Mammary epithelial cell (primary cell): ENCODE measurements at regions of chr2 and their contacts with region 1.

Region 1: GRCh38 chr2:241110607-241111439 is 8.7 kb upstream of the MTERF4 start:
- DNase-seq: no peak
- H3K4me3 ChIP-seq: no peak overlapping the region
- H3K27ac ChIP-seq: no peak overlapping the region
- H3K4me1 ChIP-seq: no peaks in the 10 kb centered on the region
- H3K27me3 ChIP-seq: no peaks in the 10 kb centered on the region
- CTCF ChIP-seq: no peak

Region 2: GRCh38 chr2:240983361-240983995 is 127.3 kb before region 1 on chr2:
- CTCF ChIA-PET with region 1: no interaction called
- dilution Hi-C with region 1: loop called (anchors 5 kb)
- in situ Hi-C with region 1: no loop called
- intact Hi-C with region 1: no loop called
- DNase-seq: peak; percentile 50
- H3K4me3 ChIP-seq: no peak overlapping the region
- H3K27ac ChIP-seq: no peak overlapping the region
- H3K4me1 ChIP-seq: no peaks in the 10 kb centered on the region
- H3K27me3 ChIP-seq: peaks cover 8% of the 10 kb centered on the region
- CTCF ChIP-seq: peak; percentile 16 to 58

Region 3: GRCh38 chr2:241148891-241149674 is 38.3 kb after region 1 on chr2 and contains the start of gene PASK:
- CTCF ChIA-PET with region 1: no interaction called
- dilution Hi-C with region 1: no loop called
- in situ Hi-C with region 1: no loop called
- intact Hi-C with region 1: no loop called
- DNase-seq: peak; percentile 97
- H3K4me3 ChIP-seq: peak within 1 kb of the TSS; percentile 69 to 85 (median 80)
- H3K27ac ChIP-seq: peak within 1 kb of the TSS; percentile 56
- H3K4me1 ChIP-seq: peaks cover 22% of the 10 kb centered on the region
- H3K27me3 ChIP-seq: no peaks in the 10 kb centered on the region
- CTCF ChIP-seq: no peak
- total RNA-seq, gene PASK: 6.0 to 18.6 TPM

Region 4: GRCh38 chr2:241199897-241200821 is 89.3 kb after region 1 on chr2:
- CTCF ChIA-PET with region 1: no interaction called
- dilution Hi-C with region 1: loop called (anchors 5 kb)
- in situ Hi-C with region 1: no loop called
- intact Hi-C with region 1: no loop called
- DNase-seq: no peak
- H3K4me3 ChIP-seq: no peak overlapping the region
- H3K27ac ChIP-seq: no peak overlapping the region
- H3K4me1 ChIP-seq: no peaks in the 10 kb centered on the region
- H3K27me3 ChIP-seq: no peaks in the 10 kb centered on the region
- CTCF ChIP-seq: no peak